ENCODE measurements at regions of chr22 and their contacts with region 1.

Region 1: GRCh38 chr22:20783844-20784723 is 10.2 kb downstream of the SERPIND1 start:
- DNase-seq: peak; percentile 36 to 72 (median 53)
- H3K4me3 ChIP-seq: no peak overlapping the region
- H3K27ac ChIP-seq: no peak overlapping the region
- H3K4me1 ChIP-seq: peaks cover 0 to 6% of the 10 kb centered on the region in 2 donors
- H3K27me3 ChIP-seq: no peaks in the 10 kb centered on the region
- CTCF ChIP-seq: peak; percentile 53 to 74 (median 56)
- POLR2A ChIP-seq: no peak

Region 2: DNA sequence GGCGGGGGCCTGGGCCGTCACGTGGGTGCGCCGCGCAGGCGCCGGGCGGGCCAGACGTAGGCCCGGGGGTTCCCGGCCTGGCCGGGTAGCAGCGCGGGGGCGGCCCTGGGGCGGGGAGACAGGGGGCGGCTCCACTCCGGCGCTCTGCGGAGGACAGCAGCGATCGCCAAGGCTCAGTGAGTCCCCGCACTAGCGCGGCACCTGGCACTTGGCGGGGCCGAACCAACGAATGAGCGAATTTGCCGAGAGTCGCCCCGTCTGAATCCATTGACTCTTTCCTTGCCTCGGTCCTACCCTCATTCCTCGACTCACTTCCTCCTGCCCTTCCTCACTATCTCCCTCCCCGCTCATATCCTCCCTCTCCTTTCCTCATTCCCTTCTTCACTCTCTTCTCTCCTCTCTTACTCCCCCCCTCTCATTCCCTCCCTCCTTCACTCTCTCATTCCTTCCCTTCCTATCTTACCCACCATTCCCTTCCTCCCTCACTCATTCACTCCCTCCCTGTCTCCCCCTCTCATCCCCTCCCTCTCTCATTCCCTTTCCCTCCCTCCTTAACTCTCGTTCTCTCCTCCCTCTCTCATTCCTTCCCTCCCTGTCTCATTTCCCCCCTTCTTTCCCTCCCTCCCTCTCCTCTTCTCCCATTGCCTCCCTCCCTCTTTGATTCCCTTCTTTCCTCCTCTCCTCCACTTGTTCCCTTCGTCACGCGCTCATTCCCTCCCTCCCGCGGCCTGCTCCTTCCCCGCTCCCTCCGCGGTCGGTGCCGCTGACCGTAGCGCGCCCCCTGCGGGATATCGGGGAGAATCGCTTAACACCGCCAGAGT is 288.0 kb before region 1 on chr22:
- intact Hi-C with region 1: no loop called
- DNase-seq: peak; percentile 89 to 93 (median 92)
- H3K4me3 ChIP-seq: peak overlapping the region in 2 of 4 donors; percentile 36 to 94
- H3K27ac ChIP-seq: peak overlapping the region; percentile 19 to 97 (median 90)
- H3K4me1 ChIP-seq: peaks cover 4 to 17% of the 10 kb centered on the region in 2 donors
- H3K27me3 ChIP-seq: no peaks in the 10 kb centered on the region
- CTCF ChIP-seq: peak; percentile 68 to 95 (median 90)
- POLR2A ChIP-seq: peak; percentile 53 to 87

Region 3: DNA sequence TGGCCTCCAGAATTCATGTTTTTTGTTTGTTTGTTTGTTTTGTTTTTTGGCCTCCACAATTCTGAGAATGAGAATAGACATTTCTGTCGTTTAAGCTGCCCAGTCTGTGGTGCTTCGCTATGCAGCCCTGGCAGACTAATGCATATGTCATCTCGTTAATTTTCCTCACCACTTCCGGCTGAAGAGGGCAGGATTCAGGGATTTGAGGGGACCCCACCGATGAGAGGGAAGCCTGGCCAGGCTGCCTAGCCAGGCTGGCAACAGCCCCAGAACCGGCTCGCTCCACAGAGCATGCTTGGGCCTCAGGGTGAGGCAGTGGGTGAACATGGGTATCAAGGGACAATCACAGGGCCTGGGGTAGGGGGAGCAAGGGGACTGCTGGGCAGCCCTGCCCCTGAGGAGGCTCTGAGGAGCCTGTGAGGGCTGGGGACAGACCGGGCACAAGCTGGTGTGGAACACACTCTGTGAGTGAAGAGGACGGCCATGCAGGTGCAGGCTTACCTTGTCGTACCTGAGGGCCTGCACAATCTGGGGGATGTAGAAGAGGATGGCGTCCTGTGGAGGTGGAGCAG is 58.0 kb before region 1 on chr22:
- intact Hi-C with region 1: loop called in 1 of 2 experiments (anchors 10 kb)
- DNase-seq: no peak
- H3K4me3 ChIP-seq: no peak overlapping the region
- H3K27ac ChIP-seq: no peak overlapping the region
- H3K4me1 ChIP-seq: no peaks in the 10 kb centered on the region
- H3K27me3 ChIP-seq: no peaks in the 10 kb centered on the region
- CTCF ChIP-seq: no peak
- POLR2A ChIP-seq: no peak

Measured in adrenal gland (tissue), 19 donors.